GM12878 (cell line): ENCODE measurements at regions of chr11 and their contacts with region 1.

Region 1: GRCh38 chr11:107665018-107665417 is 46.8 kb downstream of the SLN start:
- DNase-seq: no peak
- ATAC-seq: no peak
- H3K4me3 ChIP-seq: no peak overlapping the region
- H3K27ac ChIP-seq: no peak overlapping the region
- H3K4me1 ChIP-seq: no peaks in the 10 kb centered on the region
- H3K27me3 ChIP-seq: peaks cover 0 to 2% of the 10 kb centered on the region in 2 experiments; a peak in 2 of 4 replicates
- CTCF ChIP-seq: no peak
- EP300 ChIP-seq: no peak
- POLR2A ChIP-seq: no peak
- RAD21 ChIP-seq: no peak

Region 2: DNA sequence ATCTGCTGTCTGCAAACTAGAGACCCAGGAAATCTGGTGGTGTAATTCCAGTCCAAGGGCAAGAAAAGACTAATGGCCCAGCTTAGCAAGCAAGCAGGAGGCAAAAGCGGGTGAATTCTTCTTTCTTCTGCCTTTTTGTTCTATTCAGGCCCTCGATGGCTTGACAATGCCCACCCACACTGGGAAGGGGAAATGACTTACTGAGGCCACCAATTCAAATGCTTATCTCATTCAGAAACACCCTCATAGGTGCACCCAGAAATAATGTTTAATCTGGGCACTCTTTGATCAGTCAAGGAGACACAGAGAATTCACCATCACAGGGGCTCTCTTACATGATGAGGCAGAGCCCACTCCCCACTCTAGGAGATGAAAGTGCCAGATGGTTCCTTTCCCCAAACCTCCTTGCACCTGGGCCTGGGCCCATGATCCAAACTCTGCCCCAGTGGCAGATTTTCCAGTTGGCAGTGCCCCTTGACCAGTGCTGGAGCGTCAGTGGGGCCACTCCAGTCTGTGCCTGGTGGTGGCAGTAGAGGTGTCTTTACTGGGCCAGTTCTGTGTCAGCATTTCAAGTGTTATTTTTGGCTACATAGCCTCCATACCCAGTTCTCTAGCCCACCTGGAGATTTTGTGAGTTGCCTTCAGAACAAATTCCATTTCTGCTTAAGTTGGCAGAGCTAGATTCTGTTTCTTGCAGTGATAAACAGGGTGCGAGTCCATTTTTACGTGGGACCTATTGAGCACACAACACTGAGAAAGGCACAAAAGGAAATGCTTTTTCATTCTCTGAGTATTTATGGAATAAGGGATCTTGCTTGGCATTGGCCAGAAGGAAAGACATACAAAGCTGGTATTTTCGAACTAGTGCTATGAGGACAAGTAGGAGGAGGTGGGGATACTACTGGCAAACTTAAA is 66.5 kb before region 1 on chr11:
- CTCF ChIA-PET with region 1: no interaction called
- POLR2A ChIA-PET with region 1: no interaction called
- RAD21 ChIA-PET with region 1: interaction called, 4 read pairs
- SMC1A ChIA-PET with region 1: interaction called, 13 read pairs
- in situ Hi-C with region 1: no loop called
- intact Hi-C with region 1: no loop called
- DNase-seq: no peak
- ATAC-seq: peak; percentile 99
- H3K4me3 ChIP-seq: no peak overlapping the region
- H3K27ac ChIP-seq: no peak overlapping the region
- H3K4me1 ChIP-seq: no peaks in the 10 kb centered on the region
- H3K27me3 ChIP-seq: peaks cover 0 to 4% of the 10 kb centered on the region in 2 experiments; a peak in 1 of 4 replicates
- CTCF ChIP-seq: peak; percentile 60 to 77 (median 66)
- EP300 ChIP-seq: no peak
- POLR2A ChIP-seq: no peak
- RAD21 ChIP-seq: 0 out of 2 replicates have a peak, but pooled peaks have one; percentile 25

Region 3: DNA sequence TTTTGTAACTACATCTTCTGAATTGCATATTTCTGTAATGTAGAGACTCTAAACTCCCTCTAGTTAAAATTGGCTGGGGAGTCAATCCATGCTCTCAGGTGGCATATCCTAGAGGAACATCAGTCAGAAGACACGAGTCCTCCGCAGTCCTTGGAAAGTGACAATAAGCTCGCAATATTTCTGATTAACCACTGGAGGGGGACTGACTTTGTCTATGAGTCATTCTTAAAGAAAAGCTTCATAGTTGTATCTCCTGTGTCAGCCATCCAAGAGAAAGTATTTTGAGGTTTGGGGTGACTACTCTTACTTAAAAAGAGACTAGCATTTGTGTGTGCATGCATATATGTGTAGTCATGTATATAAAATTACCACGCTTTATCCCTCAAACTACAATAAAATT is 13.3 kb before region 1 on chr11:
- CTCF ChIA-PET with region 1: interaction called, 28 read pairs
- POLR2A ChIA-PET with region 1: interaction called, 5 read pairs
- RAD21 ChIA-PET with region 1: interaction called, 4 read pairs
- SMC1A ChIA-PET with region 1: interaction called, 6 read pairs
- in situ Hi-C with region 1: no loop called
- intact Hi-C with region 1: no loop called
- DNase-seq: no peak
- ATAC-seq: peak; percentile 32; the same call in 1 of the 3 replicates
- H3K4me3 ChIP-seq: no peak overlapping the region
- H3K27ac ChIP-seq: no peak overlapping the region
- H3K4me1 ChIP-seq: no peaks in the 10 kb centered on the region
- H3K27me3 ChIP-seq: peaks cover 0 to 3% of the 10 kb centered on the region in 2 experiments; a peak in 2 of 4 replicates
- CTCF ChIP-seq: no peak
- EP300 ChIP-seq: no peak
- POLR2A ChIP-seq: no peak
- RAD21 ChIP-seq: no peak

Region 4: DNA sequence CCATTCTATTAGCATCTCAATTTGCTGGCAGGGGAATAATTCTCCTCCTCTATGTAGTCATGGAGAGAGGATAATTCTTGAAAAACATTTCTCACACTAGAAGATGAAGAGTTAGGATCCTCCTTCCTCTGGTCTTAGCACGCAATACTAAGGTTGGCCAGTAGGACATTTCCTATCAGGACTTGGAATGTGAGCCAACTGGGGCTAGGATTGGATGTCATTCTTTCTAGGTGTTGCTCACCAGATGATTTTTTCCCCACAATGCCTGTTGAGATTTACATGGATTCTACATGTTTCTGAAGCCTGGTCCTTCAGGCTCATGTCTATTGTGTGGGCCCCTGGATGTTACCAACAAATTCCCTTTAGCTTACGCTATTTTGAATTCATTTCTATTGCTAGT is 18.8 kb after region 1 on chr11:
- CTCF ChIA-PET with region 1: interaction called, 58 read pairs
- POLR2A ChIA-PET with region 1: interaction called, 3 read pairs
- RAD21 ChIA-PET with region 1: interaction called, 15 read pairs
- SMC1A ChIA-PET with region 1: interaction called, 57 read pairs
- in situ Hi-C with region 1: no loop called
- intact Hi-C with region 1: no loop called
- DNase-seq: no peak
- ATAC-seq: no peak
- H3K4me3 ChIP-seq: no peak overlapping the region
- H3K27ac ChIP-seq: no peak overlapping the region
- H3K4me1 ChIP-seq: peaks cover 5% of the 10 kb centered on the region; the same call in 1 of the 2 replicates
- H3K27me3 ChIP-seq: no peaks in the 10 kb centered on the region
- CTCF ChIP-seq: peak in 2 of 3 experiments; percentile 41 to 42; a peak in 3 of 6 replicates
- EP300 ChIP-seq: no peak
- POLR2A ChIP-seq: no peak
- RAD21 ChIP-seq: no peak